ENCODE measurements at regions of chr1 and their contacts with region 1.

Region 1: DNA sequence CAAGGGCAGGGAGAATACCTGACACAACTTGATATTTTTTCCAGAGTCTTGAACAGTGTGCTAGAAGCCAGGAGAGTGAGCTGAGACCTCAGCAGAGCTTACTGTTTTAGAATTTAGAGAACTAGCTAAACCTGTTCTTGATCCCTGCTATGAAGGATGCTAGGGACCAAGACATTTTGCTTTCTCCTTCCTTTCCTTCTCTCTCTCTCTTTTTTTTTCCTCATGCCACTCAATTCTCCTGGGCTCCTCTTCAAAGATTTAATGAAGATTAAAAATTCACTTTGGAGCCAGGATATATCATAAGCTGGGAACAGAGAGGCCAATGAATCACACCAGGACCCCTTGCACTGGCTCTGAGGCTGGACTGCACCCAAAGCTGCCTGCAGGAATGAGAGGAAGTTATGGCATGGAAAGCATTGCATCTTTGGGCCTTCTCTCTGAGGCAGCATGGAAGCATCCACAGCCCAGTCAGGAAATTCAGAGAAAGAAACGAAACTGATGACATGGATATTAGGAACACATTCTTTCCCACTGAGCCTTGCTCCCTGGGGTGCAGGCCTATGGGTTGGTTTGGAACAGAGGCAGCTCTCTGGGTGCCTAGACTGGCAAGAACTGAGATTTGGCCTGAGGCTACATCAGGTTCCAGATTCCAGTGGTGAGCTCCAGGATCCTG is 98.8 kb downstream of the NGF start:
- DNase-seq: no peak
- H3K4me3 ChIP-seq: no peak overlapping the region
- H3K27ac ChIP-seq: no peak overlapping the region
- H3K4me1 ChIP-seq: no peaks in the 10 kb centered on the region
- H3K27me3 ChIP-seq: no peaks in the 10 kb centered on the region
- CTCF ChIP-seq: no peak
- POLR2A ChIP-seq: no peak

Region 2: DNA sequence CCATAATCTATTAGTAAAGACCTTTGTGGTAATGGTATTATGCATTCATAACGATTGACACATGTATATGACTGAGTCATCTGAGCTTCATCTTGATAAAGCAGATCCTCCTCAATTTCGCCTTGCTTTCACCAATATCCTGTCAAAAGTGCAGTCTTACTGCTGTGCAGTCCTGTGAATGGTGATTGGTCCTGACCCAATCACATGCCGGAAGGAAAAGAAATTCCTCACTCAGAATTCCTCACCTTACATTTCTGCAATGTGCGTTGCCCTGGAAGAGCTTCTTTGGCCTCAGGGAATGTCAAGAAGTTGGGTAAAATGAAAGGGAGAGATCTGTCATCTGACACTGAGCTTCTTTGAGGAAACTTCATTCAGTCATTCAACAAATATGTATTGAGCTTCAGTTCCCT is 29.0 kb before region 1 on chr1:
- intact Hi-C with region 1: no loop called
- DNase-seq: no peak
- H3K4me3 ChIP-seq: no peak overlapping the region
- H3K27ac ChIP-seq: no peak overlapping the region
- H3K4me1 ChIP-seq: no peaks in the 10 kb centered on the region
- H3K27me3 ChIP-seq: no peaks in the 10 kb centered on the region
- CTCF ChIP-seq: no peak
- POLR2A ChIP-seq: no peak

Region 3: DNA sequence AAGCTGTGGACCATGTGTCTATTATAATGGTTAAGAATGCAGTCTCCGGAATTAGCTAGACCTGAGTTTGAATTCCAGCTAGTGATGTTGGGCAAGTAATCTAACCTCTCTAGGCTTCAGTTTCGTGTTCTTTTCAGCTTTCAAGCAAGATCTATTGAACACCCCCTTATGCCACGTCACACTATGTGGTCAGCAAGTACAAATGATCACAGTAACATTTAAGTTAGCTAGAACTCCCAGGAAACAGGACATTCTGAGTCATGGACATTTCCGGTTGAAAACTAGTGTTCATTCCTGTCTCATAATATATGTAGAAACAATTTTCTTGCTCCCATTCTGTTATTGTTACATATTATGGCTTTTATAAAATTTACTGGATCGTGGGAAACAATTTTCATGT is 635.6 kb after region 1 on chr1:
- intact Hi-C with region 1: loop called (anchors 5 kb)
- DNase-seq: no peak
- H3K4me3 ChIP-seq: no peak overlapping the region
- H3K27ac ChIP-seq: no peak overlapping the region
- H3K4me1 ChIP-seq: no peaks in the 10 kb centered on the region
- H3K27me3 ChIP-seq: no peaks in the 10 kb centered on the region
- CTCF ChIP-seq: no peak
- POLR2A ChIP-seq: no peak